GM10248 (cell line): ENCODE measurements at regions of chr6 and their contacts with region 1.

Region 1: DNA sequence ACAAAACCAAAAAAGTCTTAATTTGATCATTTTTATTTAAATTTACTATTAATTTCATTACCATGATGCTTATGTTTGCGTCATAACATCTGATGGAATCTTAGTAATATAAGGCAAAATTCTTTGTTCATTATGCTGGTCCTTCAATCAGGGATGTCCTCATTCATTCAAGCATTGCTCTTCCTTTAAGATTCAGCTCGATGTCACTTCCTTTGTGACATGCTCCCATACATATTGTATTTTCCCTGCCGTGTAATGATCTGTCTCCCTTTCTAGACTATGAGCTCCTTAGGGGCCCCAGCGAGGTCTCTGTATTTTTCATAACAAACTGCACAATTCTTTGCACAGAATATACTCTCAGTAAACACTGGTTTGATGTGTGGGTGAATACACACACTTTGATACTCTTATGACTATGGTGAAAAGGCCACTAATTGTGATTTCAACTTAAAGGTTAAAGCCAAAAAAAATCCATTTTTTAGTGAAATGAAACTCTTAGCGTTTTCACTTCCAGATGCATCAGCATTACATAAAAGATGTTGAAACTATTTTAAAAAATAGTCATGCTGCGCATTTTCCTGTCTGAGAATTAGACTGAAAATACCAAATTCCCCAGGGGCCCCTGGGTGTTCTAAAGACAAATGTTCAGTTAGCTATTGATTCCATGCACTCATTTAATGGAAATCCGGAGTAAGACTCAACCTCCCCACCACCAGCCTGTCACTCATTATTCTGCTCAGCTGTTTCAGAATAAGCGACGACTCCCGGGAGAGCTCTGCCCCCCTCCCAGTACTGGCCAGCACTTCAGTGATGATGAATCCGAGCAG is 169.7 kb downstream of the ATXN1 start:
- DNase-seq: peak; percentile 69
- CTCF ChIP-seq: no peak

Region 2: GRCh38 chr6:16562498-16562897 is 29.1 kb before region 1 on chr6:
- CTCF ChIA-PET with region 1: no interaction called
- POLR2A ChIA-PET with region 1: no interaction called
- DNase-seq: no peak
- CTCF ChIP-seq: no peak

Region 3: GRCh38 chr6:16602035-16602434 is 10.4 kb after region 1 on chr6:
- CTCF ChIA-PET with region 1: interaction called, 12 read pairs
- POLR2A ChIA-PET with region 1: no interaction called
- DNase-seq: peak; percentile 80
- CTCF ChIP-seq: no peak